ENCODE measurements at regions of chr2 and their contacts with region 1.

Region 1: GRCh38 chr2:210399440-210400041 is 77.0 kb downstream of the LANCL1 start:
- DNase-seq: no peak
- ATAC-seq: no peak
- H3K4me3 ChIP-seq: no peak overlapping the region
- H3K27ac ChIP-seq: no peak overlapping the region
- H3K4me1 ChIP-seq: no peaks in the 10 kb centered on the region
- H3K27me3 ChIP-seq: no peaks in the 10 kb centered on the region
- CTCF ChIP-seq: peak; percentile 45; the same call in 1 of the 2 replicates

Region 2: DNA sequence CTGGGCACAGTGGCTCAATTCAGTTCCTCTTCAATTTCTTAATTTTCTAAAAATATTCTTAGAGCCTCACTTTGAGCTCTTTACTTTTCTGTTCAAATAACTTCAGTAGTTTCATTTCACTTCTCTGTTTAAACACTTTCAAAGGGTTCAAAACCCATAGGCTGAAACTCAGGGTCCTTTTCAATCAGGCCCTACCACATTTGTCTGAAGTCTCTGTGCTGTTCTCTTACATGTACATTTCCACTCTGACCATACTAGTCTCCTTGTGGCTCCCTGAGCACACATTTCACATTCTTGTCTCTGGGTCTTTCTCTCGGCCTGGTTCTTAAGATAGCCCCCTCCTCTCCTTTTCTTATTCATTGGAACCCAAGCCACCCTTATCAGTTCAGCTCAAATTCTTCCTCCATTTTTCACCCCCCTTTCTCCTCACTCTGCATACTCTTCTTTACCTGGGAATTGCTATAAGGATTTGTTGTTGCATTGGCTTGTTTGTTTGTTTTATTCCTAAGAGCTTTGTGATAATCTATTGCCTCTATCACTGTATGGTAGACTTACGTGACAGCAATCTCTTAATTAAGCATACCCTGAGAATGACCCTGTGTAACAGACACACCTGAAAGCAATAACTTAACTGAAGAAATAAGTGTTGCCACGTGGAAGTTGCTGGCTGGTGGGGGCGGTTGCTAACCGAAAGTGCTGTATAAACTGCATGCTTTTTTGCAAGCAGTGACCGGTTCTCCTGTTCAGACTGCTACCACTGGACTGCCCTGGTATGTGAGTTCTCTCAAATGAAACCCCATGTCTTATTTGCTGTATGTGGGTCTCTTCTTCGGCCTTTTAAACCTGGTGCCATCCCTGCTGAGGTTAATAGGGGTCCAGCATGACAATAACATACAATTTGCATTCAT is 146.6 kb before region 1 on chr2:
- CTCF ChIA-PET with region 1: interaction called, 5 read pairs
- POLR2A ChIA-PET with region 1: no interaction called
- in situ Hi-C with region 1: no loop called
- intact Hi-C with region 1: loop called (anchors 1 kb)
- DNase-seq: no peak
- ATAC-seq: no peak
- H3K4me3 ChIP-seq: no peak overlapping the region
- H3K27ac ChIP-seq: no peak overlapping the region
- H3K4me1 ChIP-seq: no peaks in the 10 kb centered on the region
- H3K27me3 ChIP-seq: no peaks in the 10 kb centered on the region
- CTCF ChIP-seq: no peak